Right ventricle myocardium inferior (tissue), 1 donor: ENCODE measurements at regions of chr3 and their contacts with region 1.

Region 1: GRCh38 chr3:66372681-66373350 is 128.0 kb downstream of the LRIG1 start:
- DNase-seq: no peak
- ATAC-seq: peak; percentile 75

Region 2: DNA sequence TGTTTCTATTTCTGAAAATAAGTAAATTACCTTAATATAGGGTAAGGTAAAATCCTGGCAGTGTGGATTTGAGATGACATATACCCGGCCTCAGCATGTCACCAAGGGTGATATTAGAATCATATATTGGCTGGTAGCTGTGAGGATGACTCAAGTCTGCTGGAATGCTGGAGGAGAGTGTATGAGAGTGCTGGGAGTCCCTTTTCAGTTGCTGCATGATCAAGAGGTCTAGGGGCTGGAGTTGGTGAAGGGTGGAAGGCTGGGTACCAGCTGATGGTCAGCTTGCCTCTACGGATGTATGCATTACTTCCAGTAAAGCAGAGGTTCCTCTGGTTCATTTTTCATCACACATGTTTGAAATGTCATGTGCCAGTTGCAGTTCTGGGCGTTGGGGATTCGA is 111.5 kb before region 1 on chr3:
- intact Hi-C with region 1: loop called (anchors 5 kb)
- DNase-seq: no peak
- ATAC-seq: peak; percentile 47

Region 3: GRCh38 chr3:66276705-66277274 is 96.0 kb before region 1 on chr3:
- intact Hi-C with region 1: loop called (anchors 1 kb)
- DNase-seq: no peak
- ATAC-seq: no peak

Region 4: GRCh38 chr3:66326340-66326739 is 46.5 kb before region 1 on chr3:
- intact Hi-C with region 1: loop called (anchors 5 kb)
- DNase-seq: no peak
- ATAC-seq: peak; percentile 72